ENCODE measurements at regions of chr1 and their contacts with region 1.

Region 1: GRCh38 chr1:70284366-70284765 is 63.2 kb downstream of the SRSF11 start:
- DNase-seq: no peak
- H3K4me3 ChIP-seq: no peak overlapping the region
- H3K27ac ChIP-seq: no peak overlapping the region
- H3K4me1 ChIP-seq: no peaks in the 10 kb centered on the region
- H3K27me3 ChIP-seq: no peaks in the 10 kb centered on the region
- CTCF ChIP-seq: no peak

Region 2: DNA sequence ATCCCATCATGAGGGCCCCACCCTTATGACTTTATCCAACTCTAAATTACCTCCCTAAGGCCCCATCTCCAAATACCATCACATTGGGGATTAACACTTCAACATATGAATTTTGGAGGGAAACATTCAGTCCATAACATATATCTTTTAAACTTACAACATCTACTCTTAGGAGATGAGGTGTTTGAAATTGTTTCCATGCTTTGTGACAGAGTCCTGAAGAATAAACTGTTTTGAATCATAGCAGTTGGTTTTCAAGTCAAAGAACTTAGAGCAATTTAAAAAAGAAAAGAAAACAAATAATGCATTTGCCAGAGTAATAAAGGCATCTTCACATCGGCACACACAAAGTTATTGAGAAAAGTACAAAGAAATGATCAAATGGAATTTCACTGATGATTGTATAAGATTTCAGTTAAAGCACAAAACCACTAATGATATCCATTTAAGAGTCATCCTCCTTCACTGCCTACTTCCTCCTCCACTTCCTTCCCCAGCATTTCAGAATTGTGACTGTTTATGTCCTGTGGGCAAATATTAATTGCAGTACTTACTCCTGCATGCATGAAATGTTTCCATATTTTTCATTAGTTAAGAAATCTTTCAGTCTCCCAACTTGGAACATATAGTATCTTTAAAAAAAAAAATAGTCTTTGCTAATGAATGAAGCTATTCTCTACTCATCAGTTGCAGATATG is 281.0 kb before region 1 on chr1:
- CTCF ChIA-PET with region 1: no interaction called
- POLR2A ChIA-PET with region 1: no interaction called
- intact Hi-C with region 1: no loop called
- DNase-seq: no peak
- H3K4me3 ChIP-seq: no peak overlapping the region
- H3K27ac ChIP-seq: no peak overlapping the region
- H3K4me1 ChIP-seq: no peaks in the 10 kb centered on the region
- H3K27me3 ChIP-seq: no peaks in the 10 kb centered on the region
- CTCF ChIP-seq: no peak

Region 3: GRCh38 chr1:70234733-70235132 is 49.6 kb before region 1 on chr1:
- CTCF ChIA-PET with region 1: no interaction called
- POLR2A ChIA-PET with region 1: no interaction called
- intact Hi-C with region 1: no loop called
- DNase-seq: no peak
- H3K4me3 ChIP-seq: no peak overlapping the region
- H3K27ac ChIP-seq: no peak overlapping the region
- H3K4me1 ChIP-seq: no peaks in the 10 kb centered on the region
- H3K27me3 ChIP-seq: no peaks in the 10 kb centered on the region
- CTCF ChIP-seq: no peak

Region 4: DNA sequence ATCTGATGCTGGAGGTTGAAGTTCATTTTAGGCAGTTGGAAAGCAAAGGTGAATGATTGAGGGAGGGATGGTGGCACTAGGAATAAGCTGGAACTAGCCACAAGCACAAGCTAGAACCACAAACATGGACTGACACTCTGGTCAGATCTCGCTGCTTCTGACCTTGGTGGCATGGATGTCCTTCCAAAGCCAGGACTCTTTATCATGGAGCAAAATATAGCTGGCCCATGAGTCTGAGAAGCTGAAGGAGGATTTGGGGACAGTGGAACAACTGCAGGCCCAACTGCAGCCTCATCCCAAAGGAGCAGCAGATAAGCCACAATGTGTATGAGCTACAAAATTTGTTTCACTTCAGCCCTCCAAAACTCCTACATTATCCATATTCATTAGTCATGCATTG is 27.7 kb before region 1 on chr1:
- CTCF ChIA-PET with region 1: interaction called, 10 read pairs
- POLR2A ChIA-PET with region 1: no interaction called
- intact Hi-C with region 1: no loop called
- DNase-seq: no peak
- H3K4me3 ChIP-seq: no peak overlapping the region
- H3K27ac ChIP-seq: no peak overlapping the region
- H3K4me1 ChIP-seq: no peaks in the 10 kb centered on the region
- H3K27me3 ChIP-seq: no peaks in the 10 kb centered on the region
- CTCF ChIP-seq: no peak

Region 5: DNA sequence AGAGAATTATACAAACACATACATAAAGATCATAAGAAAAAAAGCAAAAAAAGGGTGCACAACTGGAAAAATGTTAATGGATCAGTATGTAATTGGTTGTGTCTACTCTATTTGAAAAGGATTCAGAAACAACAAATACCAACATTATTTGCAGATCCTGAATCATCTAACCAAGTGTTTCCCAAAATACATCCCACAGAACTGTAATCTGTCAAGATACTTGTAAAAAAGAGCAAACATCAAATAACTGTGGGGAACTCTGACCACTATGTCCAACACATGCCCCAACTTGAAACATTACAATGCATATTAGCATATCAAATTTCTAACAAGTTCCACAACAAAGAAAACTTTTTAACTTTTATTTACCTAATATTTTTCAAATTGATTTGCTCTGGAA is 47.6 kb after region 1 on chr1:
- CTCF ChIA-PET with region 1: no interaction called
- POLR2A ChIA-PET with region 1: no interaction called
- intact Hi-C with region 1: no loop called
- DNase-seq: no peak
- H3K4me3 ChIP-seq: no peak overlapping the region
- H3K27ac ChIP-seq: no peak overlapping the region
- H3K4me1 ChIP-seq: peaks cover 25% of the 10 kb centered on the region
- H3K27me3 ChIP-seq: no peaks in the 10 kb centered on the region
- CTCF ChIP-seq: no peak

Measured in PC-9 (cell line).